Aorta (tissue), 5 donors: ENCODE measurements at regions of chr3 and their contacts with region 1.

Region 1: GRCh38 chr3:123745184-123745855 is 138.8 kb downstream of the MYLK start:
- DNase-seq: no peak
- ATAC-seq: no peak
- H3K4me3 ChIP-seq: no peak overlapping the region
- H3K27ac ChIP-seq: peak overlapping the region in 1 of 2 donors; percentile 36
- H3K4me1 ChIP-seq: peaks cover 0 to 3% of the 10 kb centered on the region in 2 donors
- H3K27me3 ChIP-seq: no peaks in the 10 kb centered on the region

Region 2: DNA sequence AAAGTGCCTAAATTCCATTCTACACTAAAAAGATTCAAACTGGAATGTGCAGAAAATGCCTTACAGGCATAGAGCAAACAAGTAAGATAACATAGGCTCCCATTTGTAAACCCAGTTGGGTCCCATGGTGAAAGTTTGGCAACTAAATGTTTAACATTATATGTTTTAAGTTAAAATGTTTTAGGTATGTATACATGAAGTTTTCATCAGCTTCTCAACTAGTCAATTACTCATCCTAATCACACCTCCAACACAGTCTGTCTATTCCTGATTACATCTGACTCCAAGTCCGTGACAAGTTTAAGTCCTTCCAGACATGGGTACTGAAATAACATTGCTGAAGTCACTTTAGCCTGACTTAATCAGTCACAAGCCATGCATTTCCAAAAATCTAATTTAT is 113.9 kb after region 1 on chr3:
- intact Hi-C with region 1: no loop called
- DNase-seq: no peak
- ATAC-seq: no peak
- H3K4me3 ChIP-seq: no peak overlapping the region
- H3K27ac ChIP-seq: no peak overlapping the region
- H3K4me1 ChIP-seq: peaks cover 0 to 2% of the 10 kb centered on the region in 2 donors
- H3K27me3 ChIP-seq: no peaks in the 10 kb centered on the region

Region 3: DNA sequence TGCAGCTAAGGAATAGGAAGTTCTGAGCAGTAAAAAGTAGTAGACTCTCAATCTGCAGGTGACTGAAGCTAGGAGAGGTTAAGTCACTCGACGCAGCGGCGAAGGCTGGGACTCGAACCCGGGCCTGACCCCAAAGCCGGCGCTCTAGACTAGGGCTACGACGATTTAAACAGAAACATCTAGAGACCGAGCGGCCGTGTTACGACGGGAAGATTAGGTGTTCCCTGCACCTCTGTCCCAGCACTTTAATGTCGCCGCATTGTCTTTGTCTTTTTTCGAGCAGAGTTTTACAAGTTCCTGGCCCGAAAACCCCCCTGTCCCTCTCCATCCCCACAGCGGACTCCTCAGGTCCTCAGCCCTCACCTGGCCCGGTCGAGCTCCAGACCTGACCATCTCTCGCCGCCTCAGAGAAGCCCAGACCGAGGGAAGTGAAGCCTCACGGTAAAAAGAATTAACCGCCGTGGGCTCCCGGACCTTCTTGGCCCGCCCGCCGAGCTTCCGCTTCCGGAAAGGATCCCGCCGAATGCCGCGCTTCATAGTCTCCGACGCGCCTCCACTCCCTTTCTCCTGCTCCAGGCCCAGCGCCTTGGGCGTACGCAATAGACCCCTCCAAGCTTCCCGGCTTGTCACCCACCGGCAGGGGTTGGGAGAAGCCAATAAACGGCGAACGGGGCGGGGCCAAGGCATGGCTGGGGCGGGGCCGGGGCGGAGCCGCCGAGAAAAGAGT is 215.6 kb after region 1 on chr3 and contains the start of gene CCDC14:
- intact Hi-C with region 1: no loop called
- DNase-seq: peak; percentile 96 to 98
- ATAC-seq: peak; percentile 98
- H3K4me3 ChIP-seq: peak within 1 kb of the TSS; percentile 75 to 81
- H3K27ac ChIP-seq: peak within 1 kb of the TSS in 1 of 2 donors; percentile 85
- H3K4me1 ChIP-seq: no peaks in the 10 kb centered on the region
- H3K27me3 ChIP-seq: no peaks in the 10 kb centered on the region
- total RNA-seq, gene CCDC14: 40.5 to 55.5 TPM

Region 4: DNA sequence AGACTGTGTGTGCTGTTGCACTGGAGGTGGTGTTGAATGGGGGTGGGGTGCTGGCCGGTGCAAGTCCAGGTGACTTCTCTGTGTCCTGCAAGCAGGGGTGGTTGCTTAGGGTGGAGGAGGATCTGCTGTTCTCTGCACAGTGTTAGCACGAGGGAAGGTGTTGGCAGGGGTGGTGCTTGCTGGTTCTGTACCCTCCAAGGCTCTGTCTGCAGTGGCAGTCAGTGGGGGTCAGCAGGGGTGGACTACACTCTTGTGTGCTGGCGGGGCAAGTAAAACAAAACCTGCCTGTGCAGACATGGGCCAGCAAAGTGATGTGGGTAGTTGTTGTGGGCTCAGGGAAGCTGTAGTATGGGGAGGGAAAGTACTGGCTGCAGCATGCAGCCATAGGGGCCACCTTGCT is 241.1 kb after region 1 on chr3:
- intact Hi-C with region 1: loop called in 1 of 2 experiments (anchors 10 kb)
- DNase-seq: no peak
- ATAC-seq: peak; percentile 13
- H3K4me3 ChIP-seq: no peak overlapping the region
- H3K27ac ChIP-seq: no peak overlapping the region
- H3K4me1 ChIP-seq: peaks cover 0 to 6% of the 10 kb centered on the region in 2 donors
- H3K27me3 ChIP-seq: no peaks in the 10 kb centered on the region